ENCODE measurements at regions of chr10 and their contacts with region 1.

Region 1: DNA sequence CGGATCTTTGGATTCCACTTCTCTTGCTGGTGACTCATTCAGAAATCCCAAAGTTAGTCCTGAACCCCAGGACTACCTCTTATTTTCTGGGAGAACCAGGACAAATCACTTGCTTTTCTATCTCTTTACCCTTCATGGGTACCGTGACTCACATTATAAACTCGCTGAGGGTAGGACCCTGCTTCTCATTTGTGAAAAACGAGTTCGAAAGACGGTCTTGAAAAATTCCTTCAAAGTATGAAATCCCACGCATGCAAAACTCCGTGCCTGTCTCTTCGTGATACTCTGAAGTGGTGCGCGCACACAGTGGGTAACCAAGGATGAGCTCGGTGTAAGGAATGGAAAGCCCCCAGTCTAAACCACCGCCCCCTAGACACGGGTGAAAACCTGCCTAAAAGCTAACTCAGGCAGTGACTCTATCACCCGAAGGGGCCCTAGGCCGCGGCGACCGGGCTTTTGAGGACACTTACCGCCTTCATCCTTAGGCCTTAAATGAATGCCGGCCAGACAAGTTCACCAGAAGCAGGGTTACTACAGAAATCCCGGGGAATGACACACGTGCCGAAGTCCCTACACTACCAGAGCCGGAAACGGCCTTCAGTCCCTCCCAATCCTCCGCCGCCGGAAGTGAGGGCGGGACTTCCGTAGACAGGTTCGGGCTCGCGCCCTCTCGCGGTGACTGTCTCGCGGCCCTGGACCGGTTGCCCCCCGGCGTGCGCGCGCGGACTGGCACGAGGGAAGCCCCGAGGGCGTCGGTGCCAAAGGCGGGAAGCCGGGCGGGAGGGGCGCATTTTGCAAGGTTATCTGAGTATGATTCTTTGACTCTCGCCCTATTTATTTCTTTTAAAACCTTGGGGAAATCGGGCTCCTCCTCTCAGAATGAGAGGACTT is at the start of gene NOC3L:
- DNase-seq: peak; percentile 99
- total RNA-seq, gene NOC3L: 15.5 to 18.6 TPM

Region 2: GRCh38 chr10:92923416-92923815 is 1439.2 kb before region 1 on chr10:
- intact Hi-C with region 1: no loop called
- DNase-seq: no peak

Region 3: DNA sequence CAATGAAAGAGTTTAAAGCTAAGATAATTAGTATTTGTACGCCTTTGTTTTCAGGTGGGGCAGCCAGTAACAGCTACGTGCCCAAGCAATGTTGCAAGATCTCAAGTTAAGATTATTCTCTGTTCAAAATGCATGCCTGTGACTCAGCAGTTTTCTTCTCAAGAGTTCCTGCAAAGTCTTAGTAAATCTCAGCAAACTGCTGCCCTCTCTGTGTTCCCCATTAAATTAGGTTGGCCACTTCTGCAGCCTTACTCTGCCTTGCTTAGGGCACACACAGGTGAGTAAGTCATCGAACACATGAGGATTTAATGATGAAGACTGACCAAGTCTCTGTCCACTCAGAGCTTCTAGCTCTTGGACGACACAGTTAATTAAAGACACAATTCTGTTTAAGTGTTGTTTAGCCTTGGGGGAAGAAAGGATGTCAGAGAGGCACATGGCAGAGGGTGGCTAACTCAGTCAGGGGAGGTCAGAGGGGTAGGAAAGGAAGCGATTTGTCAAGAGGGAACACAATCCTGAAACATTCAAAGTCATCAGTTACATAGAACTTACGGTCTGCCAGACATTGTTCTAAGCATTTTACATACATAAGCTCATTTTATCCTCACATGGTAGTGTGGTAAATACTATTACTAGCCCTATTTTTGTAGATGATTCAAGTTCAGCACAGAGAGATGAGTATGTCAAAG is 489.0 kb before region 1 on chr10:
- intact Hi-C with region 1: no loop called
- DNase-seq: no peak

Region 4: DNA sequence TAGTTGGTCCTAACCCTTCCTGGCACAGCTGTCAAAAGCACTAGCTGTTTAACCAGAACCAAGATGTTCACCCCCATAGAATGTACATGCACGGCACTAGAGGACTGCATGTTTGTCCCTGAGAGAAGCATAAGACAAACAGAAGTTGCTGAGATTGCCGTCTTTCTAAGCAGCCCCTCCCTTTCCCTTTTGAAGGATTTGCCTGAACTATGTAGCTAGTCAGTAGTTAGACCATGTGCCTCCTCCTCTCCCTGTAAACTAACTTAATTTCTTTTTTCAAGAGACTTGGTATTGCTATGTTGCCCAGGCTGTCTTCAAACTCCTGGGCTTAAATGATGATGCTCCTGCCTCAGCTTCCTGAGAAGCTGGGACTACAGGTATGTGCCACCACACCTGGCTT is 80.4 kb after region 1 on chr10:
- intact Hi-C with region 1: loop called in 1 of 2 experiments (anchors 10 kb)
- DNase-seq: no peak

Measured in posterior vena cava (tissue), 2 donors.